Calu3 (cell line): ENCODE measurements at regions of chr2 and their contacts with region 1.

Region 1: DNA sequence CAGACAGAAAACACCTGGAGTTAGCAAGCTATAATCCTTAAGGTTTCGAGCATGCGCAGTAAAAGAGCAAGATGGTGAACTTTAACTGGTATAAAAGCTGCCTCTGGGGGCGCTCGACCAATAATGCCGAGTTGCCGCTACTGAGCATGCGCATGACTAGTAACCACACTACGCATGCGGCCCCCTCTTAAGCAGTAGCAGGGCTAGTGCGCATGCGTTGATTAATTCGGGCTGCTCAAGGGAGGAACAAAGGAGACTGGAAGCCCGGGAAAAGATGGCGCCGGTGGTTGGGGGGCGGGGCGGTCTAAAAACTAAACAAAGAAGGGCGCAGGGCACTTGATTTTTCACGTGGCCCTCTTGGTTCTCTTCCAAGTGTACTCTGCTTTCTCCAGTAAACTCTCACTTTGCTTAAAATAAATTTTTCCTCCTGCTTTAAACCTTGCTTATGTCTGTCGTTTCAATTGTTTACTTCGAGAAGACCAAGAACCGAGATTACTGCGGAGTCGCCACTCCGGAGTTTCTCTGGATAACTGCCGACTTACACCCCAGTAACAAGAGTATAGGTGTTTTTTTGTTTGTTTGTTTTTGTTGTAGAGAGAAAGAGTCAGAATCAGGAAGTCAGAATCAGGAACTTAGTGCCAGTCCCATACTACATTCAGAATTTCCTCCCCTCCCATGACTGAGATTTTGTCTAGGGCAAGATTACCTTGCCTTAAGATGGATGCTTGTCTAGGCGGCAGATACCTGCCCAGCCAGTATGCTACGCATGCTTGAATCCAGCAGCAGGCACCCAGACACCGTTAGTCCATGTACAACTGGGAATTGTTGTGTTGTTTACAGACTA is 5.8 kb downstream of the XRCC5 start:
- DNase-seq: peak; percentile 97
- H3K4me3 Mint-ChIP-seq: peak overlapping the region; percentile 84
- H3K27ac Mint-ChIP-seq: peak overlapping the region; percentile 99
- H3K4me1 Mint-ChIP-seq: peaks cover 50% of the 10 kb centered on the region
- H3K27me3 Mint-ChIP-seq: no peaks in the 10 kb centered on the region
- CTCF ChIP-seq: peak; percentile 87

Region 2: DNA sequence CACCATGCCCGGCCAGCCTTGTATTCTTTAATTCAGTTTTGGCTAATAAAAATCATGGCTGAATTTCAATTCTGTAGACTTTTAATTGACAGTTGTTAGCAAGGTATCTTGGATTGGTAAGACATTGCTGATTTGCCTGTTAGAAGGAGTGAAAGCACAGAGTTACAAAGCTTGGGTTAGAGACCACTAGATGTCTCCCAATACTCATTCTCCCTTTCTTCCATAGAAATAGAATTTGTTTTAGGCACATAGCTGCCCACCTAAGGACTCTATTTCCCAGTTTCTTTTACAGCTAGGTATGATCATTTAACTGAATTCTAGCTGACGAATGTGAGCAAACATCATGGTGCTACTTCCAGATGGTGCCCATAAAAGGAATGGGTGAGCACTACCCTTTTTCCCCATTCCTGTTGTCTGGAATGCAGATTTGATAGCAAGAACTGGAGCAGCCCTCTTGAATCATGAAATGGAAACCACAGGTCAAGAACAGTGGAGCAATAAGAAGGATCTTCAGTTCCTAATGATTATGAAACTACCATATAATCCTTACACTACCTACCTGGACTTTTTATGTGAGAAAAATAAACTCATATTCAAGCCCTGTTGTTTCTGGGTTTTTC is 50.8 kb before region 1 on chr2:
- CTCF ChIA-PET with region 1: interaction called, 4 read pairs
- intact Hi-C with region 1: loop called (anchors 1 kb)
- DNase-seq: no peak
- H3K4me3 Mint-ChIP-seq: no peak overlapping the region
- H3K27ac Mint-ChIP-seq: no peak overlapping the region
- H3K4me1 Mint-ChIP-seq: peaks cover 32% of the 10 kb centered on the region
- H3K27me3 Mint-ChIP-seq: no peaks in the 10 kb centered on the region
- CTCF ChIP-seq: no peak

Region 3: DNA sequence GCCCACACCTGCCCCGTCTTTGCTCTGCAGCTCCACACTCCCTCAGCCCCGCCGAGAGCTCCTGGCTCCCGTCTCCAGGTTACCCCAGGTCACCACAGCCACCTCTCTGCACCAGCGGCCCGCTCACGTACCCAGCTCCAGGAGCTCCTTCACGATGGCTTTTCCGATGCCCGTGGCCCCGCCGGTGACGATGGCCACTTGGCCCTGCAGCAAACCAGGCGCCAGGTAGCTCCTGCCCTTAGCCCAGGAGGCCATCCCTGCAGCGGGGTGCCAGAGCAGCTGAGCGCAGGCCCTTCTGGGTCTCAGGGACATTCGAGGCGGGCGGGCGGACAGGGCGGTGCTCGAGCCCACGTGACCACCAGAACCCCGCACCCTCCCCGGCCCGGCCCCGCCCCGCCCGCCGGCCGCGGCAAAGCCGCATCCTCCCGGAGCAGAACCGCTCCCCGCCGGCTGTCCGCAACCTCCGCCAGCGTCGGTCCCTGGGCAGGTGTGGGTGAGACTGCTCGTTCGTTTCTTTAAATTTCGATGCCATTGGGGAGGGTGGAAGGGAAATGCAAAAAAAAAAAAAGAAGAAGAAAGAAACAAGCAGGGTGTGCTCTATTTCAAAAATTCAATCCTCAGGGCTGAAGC is 33.3 kb before region 1 on chr2 and contains the starts of genes PECR and TMEM169:
- CTCF ChIA-PET with region 1: interaction called, 5 read pairs
- intact Hi-C with region 1: loop called (anchors 2 kb)
- DNase-seq: peak; percentile 87
- H3K4me3 Mint-ChIP-seq: peak within 1 kb of the TSS; percentile 93
- H3K27ac Mint-ChIP-seq: peak within 1 kb of the TSS; percentile 55
- H3K4me1 Mint-ChIP-seq: peaks cover 34% of the 10 kb centered on the region
- H3K27me3 Mint-ChIP-seq: no peaks in the 10 kb centered on the region
- CTCF ChIP-seq: no peak
- total RNA-seq, gene PECR: 40.7 and 45.3 TPM in 2 replicates
- total RNA-seq, gene TMEM169: 8.0 and 9.0 TPM in 2 replicates